ENCODE measurements at regions of chr11 and their contacts with region 1.

Region 1: GRCh38 chr11:75031771-75032549 is 43.2 kb downstream of the NEU3 start:
- DNase-seq: peak; percentile 37 to 91
- H3K4me3 ChIP-seq: no peak overlapping the region
- H3K27ac ChIP-seq: no peak overlapping the region
- H3K4me1 ChIP-seq: no peaks in the 10 kb centered on the region
- H3K27me3 ChIP-seq: no peaks in the 10 kb centered on the region
- CTCF ChIP-seq: peak; percentile 45 to 48 (median 47)
- POLR2A ChIP-seq: no peak

Region 2: GRCh38 chr11:74748211-74749127 is 283.5 kb before region 1 on chr11 and contains the start of gene RNF169:
- intact Hi-C with region 1: no loop called
- DNase-seq: peak in 1 of 2 donors; percentile 97
- H3K4me3 ChIP-seq: peak within 1 kb of the TSS; percentile 73 to 94
- H3K27ac ChIP-seq: peak within 1 kb of the TSS; percentile 90
- H3K4me1 ChIP-seq: peaks cover 40% of the 10 kb centered on the region
- H3K27me3 ChIP-seq: no peaks in the 10 kb centered on the region
- CTCF ChIP-seq: no peak
- POLR2A ChIP-seq: peak in 1 of 2 donors; percentile 33
- total RNA-seq, gene RNF169: 20.9 TPM

Region 3: GRCh38 chr11:74929431-74930363 is 102.3 kb before region 1 on chr11:
- intact Hi-C with region 1: loop called (anchors 5 kb)
- DNase-seq: no peak
- H3K4me3 ChIP-seq: no peak overlapping the region
- H3K27ac ChIP-seq: no peak overlapping the region
- H3K4me1 ChIP-seq: no peaks in the 10 kb centered on the region
- H3K27me3 ChIP-seq: no peaks in the 10 kb centered on the region
- CTCF ChIP-seq: peak; percentile 56 to 86 (median 72)
- POLR2A ChIP-seq: no peak

Region 4: GRCh38 chr11:74988541-74989260 is 43.3 kb before region 1 on chr11 and contains the start of gene NEU3:
- intact Hi-C with region 1: no loop called
- DNase-seq: no peak
- H3K4me3 ChIP-seq: peak within 1 kb of the TSS; percentile 55 to 64
- H3K27ac ChIP-seq: peak within 1 kb of the TSS; percentile 39
- H3K4me1 ChIP-seq: peaks cover 14% of the 10 kb centered on the region
- H3K27me3 ChIP-seq: no peaks in the 10 kb centered on the region
- CTCF ChIP-seq: no peak
- POLR2A ChIP-seq: peak in 1 of 2 donors; percentile 28
- total RNA-seq, gene NEU3: 5.6 TPM

Region 5: GRCh38 chr11:76410851-76411357 is 1378.9 kb after region 1 on chr11:
- intact Hi-C with region 1: loop called (anchors 5 kb)
- DNase-seq: no peak
- H3K4me3 ChIP-seq: no peak overlapping the region
- H3K27ac ChIP-seq: no peak overlapping the region
- H3K4me1 ChIP-seq: peaks cover 13% of the 10 kb centered on the region
- H3K27me3 ChIP-seq: no peaks in the 10 kb centered on the region
- CTCF ChIP-seq: no peak
- POLR2A ChIP-seq: no peak